ENCODE measurements at regions of chr16 and their contacts with region 1.

Region 1: DNA sequence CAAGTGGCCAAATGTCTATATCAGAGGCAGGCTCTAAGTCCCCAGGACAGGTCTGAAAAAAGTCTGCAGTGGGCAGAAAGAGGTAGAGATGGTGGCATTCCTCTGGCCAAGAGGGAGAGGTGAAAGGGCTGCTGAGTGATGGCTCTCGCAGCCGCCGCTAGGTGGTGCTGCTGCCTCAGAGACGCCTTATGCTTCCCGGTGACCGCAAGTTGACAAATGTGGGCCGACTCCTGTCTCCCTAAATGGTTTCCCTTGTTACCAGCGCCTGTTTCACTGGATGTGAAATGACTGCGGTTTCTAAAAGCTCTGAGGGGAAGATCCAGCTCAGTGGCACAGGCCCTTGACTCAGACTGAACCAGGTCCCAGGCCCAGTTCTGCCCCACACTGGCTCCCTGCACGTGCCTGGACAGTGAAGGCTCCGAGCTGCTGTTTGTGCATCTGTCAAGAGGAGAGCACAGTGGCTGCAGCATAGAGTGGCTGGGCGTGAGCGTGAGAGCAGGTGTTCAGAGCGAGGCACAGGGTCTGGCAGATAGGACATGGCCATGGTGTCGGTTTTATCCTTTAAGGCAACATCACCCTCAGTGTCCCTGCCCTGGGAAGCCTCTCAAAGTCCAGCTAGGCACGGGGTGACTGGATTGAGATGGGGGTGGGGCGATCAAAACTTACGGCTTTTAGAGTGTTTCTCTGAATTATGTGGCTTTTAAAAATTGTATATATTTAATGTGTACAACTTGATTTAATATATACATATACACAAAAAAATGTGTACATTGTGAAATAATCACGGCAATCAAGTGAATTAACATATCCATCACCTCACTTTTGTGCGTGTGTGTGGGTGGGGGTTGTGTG is 19.9 kb downstream of the CLEC16A start:
- DNase-seq: peak; percentile 86
- ATAC-seq: peak; percentile 70
- H3K4me3 Mint-ChIP-seq: peak overlapping the region; percentile 42
- H3K27ac Mint-ChIP-seq: peak overlapping the region; percentile 83
- H3K4me1 Mint-ChIP-seq: peaks cover 69% of the 10 kb centered on the region
- H3K27me3 Mint-ChIP-seq: no peaks in the 10 kb centered on the region

Region 2: DNA sequence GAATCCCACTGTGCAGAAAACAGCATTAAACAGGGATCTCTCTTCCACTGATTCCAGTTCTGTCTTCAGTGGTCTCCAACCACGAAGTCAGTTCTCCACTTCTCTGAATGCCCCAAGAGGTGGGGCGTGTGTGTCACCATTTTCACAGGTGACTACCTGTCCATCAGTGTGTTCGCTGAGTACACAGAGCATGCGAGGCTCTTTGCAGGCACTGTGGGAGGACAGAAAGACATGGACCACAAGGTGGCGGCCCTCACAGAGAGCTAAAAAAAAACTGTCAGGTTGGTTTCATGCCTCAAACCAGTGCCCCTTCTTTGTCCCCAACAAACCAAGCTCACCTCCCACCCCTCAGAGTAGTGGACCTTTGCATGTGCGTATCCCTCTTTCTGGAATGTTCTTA is 397.7 kb before region 1 on chr16:
- CTCF ChIA-PET with region 1: no interaction called
- POLR2A ChIA-PET with region 1: no interaction called
- DNase-seq: no peak
- ATAC-seq: no peak
- H3K4me3 Mint-ChIP-seq: no peak overlapping the region
- H3K27ac Mint-ChIP-seq: no peak overlapping the region
- H3K4me1 Mint-ChIP-seq: no peaks in the 10 kb centered on the region
- H3K27me3 Mint-ChIP-seq: peaks cover 7% of the 10 kb centered on the region

Region 3: DNA sequence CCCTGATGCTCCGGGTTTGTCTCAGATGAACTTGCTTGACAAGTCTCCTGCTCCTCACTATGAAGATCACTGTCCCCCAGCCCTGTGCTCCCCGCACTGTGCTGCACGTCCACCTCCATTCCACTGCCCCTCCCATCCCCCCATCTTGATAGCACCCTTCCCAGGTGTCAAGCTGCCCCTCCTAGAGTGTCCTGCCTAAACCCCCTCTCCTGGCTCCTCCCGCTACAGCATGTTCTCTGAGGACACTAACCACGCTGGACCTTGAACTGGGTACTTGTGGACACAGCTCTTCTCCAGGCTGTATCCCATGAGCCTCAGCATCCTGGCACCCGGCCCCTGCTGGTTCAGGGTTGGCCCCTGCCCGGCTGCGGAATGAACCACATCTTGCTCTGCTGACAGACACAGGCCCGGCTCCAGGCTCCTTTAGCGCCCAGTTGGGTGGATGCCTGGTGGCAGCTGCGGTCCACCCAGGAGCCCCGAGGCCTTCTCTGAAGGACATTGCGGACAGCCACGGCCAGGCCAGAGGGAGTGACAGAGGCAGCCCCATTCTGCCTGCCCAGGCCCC is 40.5 kb before region 1 on chr16:
- CTCF ChIA-PET with region 1: no interaction called
- POLR2A ChIA-PET with region 1: no interaction called
- DNase-seq: no peak
- ATAC-seq: no peak
- H3K4me3 Mint-ChIP-seq: no peak overlapping the region
- H3K27ac Mint-ChIP-seq: no peak overlapping the region
- H3K4me1 Mint-ChIP-seq: peaks cover 2% of the 10 kb centered on the region
- H3K27me3 Mint-ChIP-seq: no peaks in the 10 kb centered on the region

Region 4: GRCh38 chr16:10949370-10949970 is 14.8 kb before region 1 on chr16:
- CTCF ChIA-PET with region 1: interaction called, 124 read pairs
- POLR2A ChIA-PET with region 1: interaction called, 3 read pairs
- DNase-seq: peak; percentile 80
- ATAC-seq: peak; percentile 76
- H3K4me3 Mint-ChIP-seq: peak overlapping the region; percentile 0
- H3K27ac Mint-ChIP-seq: peak overlapping the region; percentile 28
- H3K4me1 Mint-ChIP-seq: peaks cover 61% of the 10 kb centered on the region
- H3K27me3 Mint-ChIP-seq: no peaks in the 10 kb centered on the region

Region 5: DNA sequence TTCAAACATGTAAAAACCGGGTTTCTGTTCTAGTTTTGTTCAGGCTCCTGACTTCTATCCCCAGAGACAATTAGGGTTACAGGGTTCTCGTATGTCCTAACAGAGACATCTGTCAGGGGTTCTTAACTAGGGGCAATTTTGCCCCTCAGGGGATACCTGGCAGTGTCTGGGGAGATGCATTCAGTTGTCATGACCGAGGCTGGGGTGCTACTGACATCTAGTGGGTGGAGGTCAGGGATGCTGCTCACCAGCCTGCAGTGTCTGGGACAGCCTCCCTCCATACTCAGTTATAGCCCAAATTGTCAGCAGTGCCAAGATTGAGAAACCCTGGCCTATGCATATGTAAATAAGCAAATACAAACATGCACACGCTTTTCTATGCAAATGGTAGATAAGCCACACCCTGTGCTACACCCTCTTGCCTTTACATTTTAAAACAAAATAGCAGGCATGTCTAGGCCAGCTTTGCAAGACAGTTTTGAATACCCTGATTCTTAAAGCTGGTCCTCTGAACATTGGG is 17.5 kb after region 1 on chr16:
- CTCF ChIA-PET with region 1: interaction called, 38 read pairs
- POLR2A ChIA-PET with region 1: no interaction called
- DNase-seq: peak; percentile 75
- ATAC-seq: peak; percentile 83
- H3K4me3 Mint-ChIP-seq: no peak overlapping the region
- H3K27ac Mint-ChIP-seq: peak overlapping the region; percentile 64
- H3K4me1 Mint-ChIP-seq: peaks cover 81% of the 10 kb centered on the region
- H3K27me3 Mint-ChIP-seq: no peaks in the 10 kb centered on the region

Region 6: GRCh38 chr16:11263737-11264136 is 299.5 kb after region 1 on chr16:
- CTCF ChIA-PET with region 1: interaction called, 210 read pairs
- POLR2A ChIA-PET with region 1: interaction called, 79 read pairs
- DNase-seq: peak; percentile 74
- ATAC-seq: peak; percentile 81
- H3K4me3 Mint-ChIP-seq: peak overlapping the region; percentile 48
- H3K27ac Mint-ChIP-seq: peak overlapping the region; percentile 88
- H3K4me1 Mint-ChIP-seq: peaks cover 52% of the 10 kb centered on the region
- H3K27me3 Mint-ChIP-seq: peaks cover 6% of the 10 kb centered on the region

Region 7: DNA sequence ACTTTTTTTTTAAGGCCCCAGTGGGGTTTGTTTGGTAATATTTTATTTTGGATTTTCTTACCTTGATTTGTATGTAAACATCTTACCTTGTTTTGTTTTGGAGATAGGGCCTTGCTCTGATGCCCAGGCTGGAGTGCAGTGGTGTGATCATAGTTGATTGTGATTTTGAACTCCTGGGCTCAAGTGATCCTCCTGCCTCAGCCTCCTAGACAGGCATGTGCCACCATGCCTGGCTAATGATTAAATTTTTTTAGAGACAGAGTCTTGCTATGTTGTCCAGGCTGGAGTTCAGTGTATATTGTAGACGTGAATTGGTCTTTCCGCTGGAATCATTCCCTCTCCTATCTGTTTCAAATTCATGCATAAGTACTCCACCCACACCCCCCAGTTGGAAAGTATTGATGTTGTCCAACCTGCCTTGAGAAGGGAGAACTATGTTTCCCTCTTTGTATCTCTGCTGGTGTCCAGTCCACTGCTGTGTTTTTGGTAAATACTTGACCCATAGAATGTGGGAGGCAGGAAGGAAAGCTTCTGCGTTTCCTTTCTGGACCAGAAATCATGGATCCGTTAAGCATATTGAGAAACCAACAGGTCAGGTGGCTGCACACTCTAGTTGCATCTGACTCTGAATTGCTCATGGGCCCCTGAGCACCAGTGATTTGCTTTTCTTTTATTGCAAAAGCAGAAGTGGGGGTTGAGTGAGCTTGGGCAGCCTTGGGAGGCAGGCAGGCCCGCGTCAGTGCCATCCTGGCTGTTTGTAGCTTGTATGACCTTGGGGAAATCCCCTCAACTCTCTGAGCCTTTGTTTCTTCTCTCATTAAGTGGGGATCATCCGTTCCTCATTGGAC is 406.0 kb after region 1 on chr16:
- CTCF ChIA-PET with region 1: interaction called, 22 read pairs
- POLR2A ChIA-PET with region 1: no interaction called
- DNase-seq: no peak
- ATAC-seq: no peak
- H3K4me3 Mint-ChIP-seq: no peak overlapping the region
- H3K27ac Mint-ChIP-seq: no peak overlapping the region
- H3K4me1 Mint-ChIP-seq: peaks cover 24% of the 10 kb centered on the region
- H3K27me3 Mint-ChIP-seq: no peaks in the 10 kb centered on the region

Measured in activated CD8-positive, alpha-beta T cell treated with anti-CD3 and anti-CD28 coated beads, Interleukin-2, amount 10 ng/mL, durations not matched to agents 7 days and 5 days (primary cell).